SK-N-SH (cell line): ENCODE measurements at regions of chr16 and their contacts with region 1.

Region 1: GRCh38 chr16:55701442-55702319 is 45.9 kb downstream of the SLC6A2 start:
- DNase-seq: peak; percentile 65
- H3K4me3 ChIP-seq: no peak overlapping the region
- H3K27ac ChIP-seq: peak overlapping the region in 1 of 2 experiments; percentile 76; a peak in 2 of 4 replicates
- H3K4me1 ChIP-seq: peaks cover 0 to 57% of the 10 kb centered on the region in 2 experiments; a peak in 2 of 4 replicates
- H3K27me3 ChIP-seq: no peaks in the 10 kb centered on the region; the same call in 1 of the 2 replicates
- CTCF ChIP-seq: peak; percentile 65
- EP300 ChIP-seq: no peak
- RAD21 ChIP-seq: peak; percentile 63

Region 2: DNA sequence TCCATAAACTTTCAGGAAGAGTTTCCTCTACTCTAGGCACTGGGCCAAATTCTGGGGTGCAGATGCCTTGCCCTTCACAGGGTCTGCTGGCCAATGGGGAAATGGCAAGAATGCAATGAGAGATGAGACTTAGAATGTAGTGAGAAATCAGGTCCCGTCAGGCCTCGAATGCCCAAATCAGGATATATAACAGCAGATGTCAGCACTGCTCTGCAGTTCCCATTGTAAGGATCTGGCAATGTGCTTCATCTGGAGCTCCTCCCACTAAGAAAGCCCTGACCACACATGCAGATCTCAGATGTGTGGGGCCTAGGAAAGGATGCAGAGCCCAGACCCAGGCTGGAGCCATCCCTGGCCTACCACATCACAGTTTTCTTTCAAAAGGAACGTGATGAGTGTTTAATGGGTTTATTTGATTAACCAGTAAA is 206.7 kb before region 1 on chr16:
- CTCF ChIA-PET with region 1: interaction called, 21 read pairs
- POLR2A ChIA-PET with region 1: interaction called, 4 read pairs
- DNase-seq: peak; percentile 77
- H3K4me3 ChIP-seq: no peak overlapping the region
- H3K27ac ChIP-seq: peak overlapping the region; percentile 84 to 94
- H3K4me1 ChIP-seq: peaks cover 37 to 48% of the 10 kb centered on the region in 2 experiments
- H3K27me3 ChIP-seq: no peaks in the 10 kb centered on the region
- CTCF ChIP-seq: peak; percentile 56
- EP300 ChIP-seq: peak in 1 of 2 experiments; percentile 27; a peak in 1 of 4 replicates
- RAD21 ChIP-seq: peak; percentile 88

Region 3: DNA sequence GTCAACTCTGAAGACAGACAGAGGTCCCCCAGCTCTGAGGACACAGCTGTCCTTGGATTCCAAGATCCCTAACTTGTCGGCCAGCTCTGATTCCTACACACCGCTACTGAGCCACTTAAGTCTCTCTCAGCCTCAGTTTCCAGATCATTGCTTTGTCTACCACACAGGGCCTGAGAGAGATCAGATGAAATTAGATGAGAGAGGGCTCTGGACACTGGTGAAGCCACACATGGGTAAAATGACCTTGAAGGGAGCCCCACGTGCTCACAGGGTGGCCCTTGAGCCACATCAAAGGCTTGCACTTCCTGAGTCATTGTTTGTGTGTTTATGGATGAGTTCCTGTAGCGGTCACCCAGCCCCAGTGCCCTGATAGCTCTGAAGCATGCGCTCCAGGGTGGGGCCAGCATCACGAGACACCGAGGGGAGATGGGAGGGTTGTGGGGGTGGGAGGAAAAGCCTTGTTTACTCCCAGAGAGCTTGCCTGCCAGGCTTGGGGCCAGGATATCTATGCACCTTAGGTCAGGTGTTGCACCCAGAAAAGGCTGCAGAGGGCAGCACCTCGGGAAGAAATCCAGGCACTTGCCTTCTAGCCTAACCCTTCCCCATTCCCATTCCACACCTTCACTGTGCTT is 78.6 kb before region 1 on chr16:
- CTCF ChIA-PET with region 1: interaction called, 17 read pairs
- POLR2A ChIA-PET with region 1: no interaction called
- DNase-seq: peak; percentile 30
- H3K4me3 ChIP-seq: no peak overlapping the region
- H3K27ac ChIP-seq: no peak overlapping the region; a peak in 1 of 4 replicates
- H3K4me1 ChIP-seq: peaks cover 0 to 2% of the 10 kb centered on the region in 2 experiments; a peak in 2 of 4 replicates
- H3K27me3 ChIP-seq: no peaks in the 10 kb centered on the region
- CTCF ChIP-seq: peak; percentile 23; the same call in 1 of the 2 replicates
- EP300 ChIP-seq: no peak
- RAD21 ChIP-seq: peak; percentile 42

Region 4: GRCh38 chr16:55655860-55656695 is 45.6 kb before region 1 on chr16 and contains the start of gene SLC6A2:
- CTCF ChIA-PET with region 1: interaction called, 51 read pairs
- POLR2A ChIA-PET with region 1: interaction called, 10 read pairs
- DNase-seq: peak; percentile 95
- H3K4me3 ChIP-seq: peak within 1 kb of the TSS in 1 of 2 experiments; percentile 59; a peak in 2 of 4 replicates
- H3K27ac ChIP-seq: peak within 1 kb of the TSS; percentile 22 to 100; a peak in 2 of 4 replicates
- H3K4me1 ChIP-seq: peaks cover 0 to 58% of the 10 kb centered on the region in 2 experiments; a peak in 2 of 4 replicates
- H3K27me3 ChIP-seq: peaks cover 12% of the 10 kb centered on the region
- CTCF ChIP-seq: no peak
- EP300 ChIP-seq: peak in 1 of 2 experiments; percentile 90; a peak in 2 of 4 replicates
- RAD21 ChIP-seq: no peak
- polyA plus RNA-seq, gene SLC6A2: 3.3 and 12.7 TPM in 2 replicates

Region 5: DNA sequence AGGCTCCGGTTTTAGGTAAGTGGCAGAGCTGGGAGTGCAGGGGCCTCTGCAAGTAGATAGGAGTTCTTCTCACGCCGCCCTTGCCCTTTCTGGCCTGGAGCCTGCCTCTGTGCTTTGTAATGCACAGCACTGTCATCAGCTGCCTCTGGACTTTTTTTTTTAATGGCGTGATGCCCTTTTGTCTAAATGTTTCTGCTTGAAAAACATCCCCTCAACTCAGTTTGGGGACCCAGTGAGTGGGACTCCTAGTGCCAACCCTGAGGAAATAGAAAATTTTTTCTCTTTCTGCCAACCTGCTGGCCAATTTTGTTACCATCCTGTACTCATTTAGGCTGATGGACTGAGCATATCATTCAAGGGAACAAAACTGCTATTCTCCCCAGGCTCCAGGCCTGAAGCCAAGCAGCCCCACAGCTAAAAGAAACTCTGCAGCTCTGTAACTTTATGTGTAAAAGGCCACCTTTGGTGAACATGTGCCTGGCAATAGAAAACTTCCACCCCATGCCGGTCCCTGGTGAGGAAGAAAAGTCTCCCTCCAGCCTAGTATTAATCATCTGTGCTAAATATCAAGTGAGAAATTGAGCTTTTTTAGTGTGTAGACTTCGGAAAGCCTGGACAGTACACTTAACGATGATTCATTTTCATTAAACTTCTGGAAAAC is 23.4 kb before region 1 on chr16:
- CTCF ChIA-PET with region 1: interaction called, 15 read pairs
- POLR2A ChIA-PET with region 1: no interaction called
- DNase-seq: no peak
- H3K4me3 ChIP-seq: no peak overlapping the region
- H3K27ac ChIP-seq: no peak overlapping the region
- H3K4me1 ChIP-seq: peaks cover 0 to 11% of the 10 kb centered on the region in 2 experiments; a peak in 1 of 4 replicates
- H3K27me3 ChIP-seq: no peaks in the 10 kb centered on the region
- CTCF ChIP-seq: no peak
- EP300 ChIP-seq: no peak
- RAD21 ChIP-seq: no peak